Mammary epithelial cell (primary cell): ENCODE measurements at regions of chr22 and their contacts with region 1.

Region 1: DNA sequence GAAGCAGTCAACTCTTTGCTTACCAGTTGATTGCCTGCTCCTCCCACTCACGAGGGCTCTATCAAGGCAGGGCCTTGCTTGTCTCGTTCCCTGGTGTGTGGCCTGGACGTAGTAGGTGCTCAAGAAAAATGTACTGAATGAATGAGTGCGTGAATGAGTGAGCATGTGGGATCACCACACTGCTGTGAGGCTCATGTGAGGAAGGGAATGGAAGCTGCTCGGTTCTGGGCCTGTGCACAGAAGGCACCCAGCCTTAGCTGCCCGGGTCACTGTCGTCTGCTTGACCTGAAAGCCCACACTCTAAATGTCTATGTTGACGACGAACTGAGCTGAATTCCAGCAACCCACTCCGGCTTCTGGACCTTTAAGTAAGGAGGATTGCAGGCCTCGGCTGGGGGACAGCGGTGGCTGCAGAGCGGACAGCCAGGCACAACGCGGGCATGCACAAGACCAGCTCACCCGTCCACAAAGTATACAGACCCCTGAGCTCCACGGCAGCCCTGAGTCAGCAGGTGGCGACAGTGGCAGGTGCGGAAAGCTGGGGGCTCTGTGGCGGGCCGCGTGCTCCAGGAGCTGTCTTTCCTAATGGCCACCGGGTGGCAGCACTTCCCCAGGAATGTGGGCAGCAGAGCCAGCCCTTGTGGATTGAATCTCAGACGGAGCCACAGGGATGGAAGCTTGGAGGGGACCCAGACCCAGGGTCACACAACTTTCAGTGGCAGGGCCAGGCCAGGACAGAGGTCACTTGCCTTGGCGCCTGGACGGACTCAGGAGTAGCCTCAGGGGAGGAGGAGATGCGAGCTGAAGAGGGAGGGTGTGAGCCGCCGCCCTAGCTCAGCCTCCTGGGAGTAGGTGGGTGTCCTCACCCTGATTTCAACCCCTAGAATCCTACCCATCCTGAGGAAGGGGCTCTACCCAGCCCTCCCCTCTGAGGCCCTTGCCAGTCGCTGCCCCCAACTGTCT is 5.0 kb upstream of the PICK1 start:
- DNase-seq: peak; percentile 50
- H3K4me3 ChIP-seq: no peak overlapping the region
- H3K27ac ChIP-seq: no peak overlapping the region
- H3K4me1 ChIP-seq: peaks cover 6% of the 10 kb centered on the region
- H3K27me3 ChIP-seq: no peaks in the 10 kb centered on the region
- CTCF ChIP-seq: peak; percentile 73 to 83

Region 2: DNA sequence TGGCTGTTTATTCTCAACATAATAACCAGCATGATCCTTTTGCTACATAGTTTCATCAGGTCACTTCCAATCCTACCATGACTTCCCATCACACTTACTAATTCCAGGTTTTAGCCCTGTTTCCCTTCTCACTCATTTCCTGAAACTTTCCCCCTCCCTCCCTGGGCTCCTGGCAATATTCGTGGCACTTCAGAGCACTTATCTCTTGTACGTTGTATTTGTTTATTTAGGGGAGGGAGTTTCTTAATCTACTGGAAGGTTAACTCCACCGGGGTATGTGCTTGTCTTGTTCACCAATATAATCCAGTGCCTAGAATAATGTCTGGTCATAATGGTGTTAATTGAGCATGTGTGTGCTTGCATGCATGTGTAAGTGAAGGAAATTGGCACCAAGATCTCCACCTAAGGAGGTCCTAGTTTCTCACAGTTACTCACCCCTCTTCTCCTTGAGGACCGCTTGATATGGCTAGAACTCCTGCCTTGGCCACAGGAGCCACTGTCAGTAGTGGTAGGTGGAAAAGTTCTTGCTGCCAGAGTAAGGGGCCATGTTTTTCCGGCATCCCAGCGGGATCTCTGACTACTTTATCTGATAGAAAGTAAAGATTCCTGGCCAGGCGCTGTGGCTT is 191.3 kb before region 1 on chr22:
- CTCF ChIA-PET with region 1: no interaction called
- dilution Hi-C with region 1: no loop called
- in situ Hi-C with region 1: no loop called
- intact Hi-C with region 1: no loop called
- DNase-seq: no peak
- H3K4me3 ChIP-seq: no peak overlapping the region
- H3K27ac ChIP-seq: no peak overlapping the region
- H3K4me1 ChIP-seq: no peaks in the 10 kb centered on the region
- H3K27me3 ChIP-seq: no peaks in the 10 kb centered on the region
- CTCF ChIP-seq: no peak

Region 3: GRCh38 chr22:38104084-38104483 is 51.9 kb after region 1 on chr22:
- CTCF ChIA-PET with region 1: no interaction called
- dilution Hi-C with region 1: no loop called
- in situ Hi-C with region 1: no loop called
- intact Hi-C with region 1: loop called (anchors 1 kb)
- DNase-seq: no peak
- H3K4me3 ChIP-seq: no peak overlapping the region
- H3K27ac ChIP-seq: no peak overlapping the region
- H3K4me1 ChIP-seq: no peaks in the 10 kb centered on the region
- H3K27me3 ChIP-seq: no peaks in the 10 kb centered on the region
- CTCF ChIP-seq: peak in 1 of 2 donors; percentile 43

Region 4: GRCh38 chr22:38272373-38273134 is 220.4 kb after region 1 on chr22 and contains the start of gene TMEM184B:
- CTCF ChIA-PET with region 1: no interaction called
- dilution Hi-C with region 1: loop called (anchors 5 kb)
- in situ Hi-C with region 1: no loop called
- intact Hi-C with region 1: loop called (anchors 5 kb)
- DNase-seq: peak; percentile 67
- H3K4me3 ChIP-seq: peak within 1 kb of the TSS; percentile 68 to 92 (median 84)
- H3K27ac ChIP-seq: peak within 1 kb of the TSS; percentile 55
- H3K4me1 ChIP-seq: peaks cover 24% of the 10 kb centered on the region
- H3K27me3 ChIP-seq: no peaks in the 10 kb centered on the region
- CTCF ChIP-seq: no peak
- total RNA-seq, gene TMEM184B: 26.2 to 68.5 TPM

Region 5: DNA sequence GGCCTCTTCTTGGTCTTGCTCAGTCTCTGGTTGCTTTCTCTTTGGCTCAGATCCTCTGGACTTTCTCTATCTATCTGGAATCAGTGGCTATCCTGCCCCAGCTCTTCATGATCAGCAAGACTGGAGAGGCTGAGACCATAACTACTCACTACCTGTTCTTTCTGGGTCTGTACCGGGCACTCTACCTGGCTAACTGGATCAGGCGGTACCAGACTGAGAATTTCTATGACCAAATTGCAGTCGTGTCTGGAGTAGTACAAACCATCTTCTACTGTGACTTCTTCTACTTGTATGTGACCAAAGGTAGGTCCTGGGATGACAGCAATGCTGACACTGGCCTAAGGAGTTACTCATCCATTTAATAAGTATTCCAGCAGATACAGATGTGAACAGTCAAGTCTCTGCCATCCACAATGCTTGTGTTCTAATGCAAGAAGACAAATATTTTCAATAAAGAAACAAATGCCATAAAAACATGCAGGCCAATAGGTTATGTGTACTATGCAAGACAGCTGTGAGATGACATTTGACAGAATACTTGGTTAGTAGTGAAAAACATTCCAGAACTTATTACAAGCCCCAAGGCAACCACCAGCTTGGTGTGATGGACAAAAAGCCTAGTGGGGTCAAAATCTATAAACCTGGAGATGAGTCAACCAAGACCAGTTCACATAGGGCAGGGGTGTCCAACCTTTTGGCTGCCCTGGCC is 429.1 kb after region 1 on chr22:
- CTCF ChIA-PET with region 1: no interaction called
- dilution Hi-C with region 1: loop called (anchors 5 kb)
- in situ Hi-C with region 1: no loop called
- intact Hi-C with region 1: loop called (anchors 5 kb)
- DNase-seq: no peak
- H3K4me3 ChIP-seq: no peak overlapping the region
- H3K27ac ChIP-seq: no peak overlapping the region
- H3K4me1 ChIP-seq: peaks cover 8% of the 10 kb centered on the region
- H3K27me3 ChIP-seq: no peaks in the 10 kb centered on the region
- CTCF ChIP-seq: no peak

Region 6: DNA sequence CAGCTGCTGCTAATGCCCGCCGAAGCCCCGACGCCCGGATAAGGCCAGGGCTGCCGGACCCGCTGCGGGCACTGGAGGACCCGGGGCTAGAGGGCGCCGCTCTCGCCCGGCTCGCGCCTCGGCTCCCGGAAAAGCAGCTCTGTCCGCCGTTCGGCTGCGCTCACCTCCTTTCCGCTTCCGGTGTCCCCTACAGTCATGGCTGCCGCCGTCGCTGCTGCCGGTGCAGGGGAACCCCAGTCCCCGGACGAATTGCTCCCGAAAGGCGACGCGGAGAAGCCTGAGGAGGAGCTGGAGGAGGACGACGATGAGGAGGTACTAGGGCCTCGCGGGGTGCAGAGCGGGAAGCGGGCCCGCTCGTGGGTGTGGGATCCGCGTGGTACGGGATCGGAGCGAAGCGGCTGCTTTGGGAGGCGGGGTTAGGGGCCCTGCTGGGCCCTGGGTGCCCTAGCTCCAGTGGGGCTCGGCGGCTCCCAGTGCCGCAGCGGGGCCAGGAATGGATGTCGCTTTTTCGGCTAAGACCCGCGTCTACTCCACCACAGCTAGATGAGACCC is 629.7 kb after region 1 on chr22 and contains the start of gene TOMM22:
- CTCF ChIA-PET with region 1: no interaction called
- dilution Hi-C with region 1: no loop called
- in situ Hi-C with region 1: no loop called
- intact Hi-C with region 1: loop called (anchors 1 kb)
- DNase-seq: peak; percentile 85
- H3K4me3 ChIP-seq: peak within 1 kb of the TSS; percentile 68 to 95 (median 93)
- H3K27ac ChIP-seq: peak within 1 kb of the TSS; percentile 88
- H3K4me1 ChIP-seq: peaks cover 8% of the 10 kb centered on the region
- H3K27me3 ChIP-seq: no peaks in the 10 kb centered on the region
- CTCF ChIP-seq: peak; percentile 36 to 76
- total RNA-seq, gene TOMM22: 56.5 to 76.7 TPM

Region 7: DNA sequence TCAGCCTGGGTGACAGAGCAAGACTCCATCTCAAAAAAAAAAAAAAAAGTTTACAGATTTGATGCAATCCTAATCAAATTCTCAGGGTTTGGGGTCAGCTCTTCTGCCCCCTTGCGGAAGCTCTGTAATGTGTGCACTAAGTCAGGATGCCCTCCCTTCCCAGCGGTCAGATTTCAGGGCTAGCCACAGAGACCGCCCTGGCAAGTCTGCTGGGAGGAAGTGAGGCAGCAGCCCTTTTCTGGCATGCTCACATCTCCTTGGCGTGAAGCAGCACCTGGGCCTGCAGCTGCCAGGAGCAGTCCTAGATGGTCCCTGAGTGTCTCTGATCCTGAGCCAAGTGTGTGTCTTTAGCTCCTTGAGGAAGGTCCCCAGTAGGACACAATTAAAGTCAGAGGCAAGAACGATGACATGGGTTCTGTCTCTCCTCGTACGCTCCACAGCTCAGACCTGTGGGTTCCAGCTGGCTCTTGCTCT is 951.0 kb after region 1 on chr22:
- CTCF ChIA-PET with region 1: interaction called, 4 read pairs
- dilution Hi-C with region 1: no loop called
- in situ Hi-C with region 1: no loop called
- intact Hi-C with region 1: loop called (anchors 10 kb)
- DNase-seq: peak; percentile 87
- H3K4me3 ChIP-seq: no peak overlapping the region
- H3K27ac ChIP-seq: no peak overlapping the region
- H3K4me1 ChIP-seq: peaks cover 5% of the 10 kb centered on the region
- H3K27me3 ChIP-seq: no peaks in the 10 kb centered on the region
- CTCF ChIP-seq: peak; percentile 74 to 77